ENCODE measurements at regions of chr22 and their contacts with region 1.

Region 1: GRCh38 chr22:45309472-45310227 is at the start of gene FAM118A:
- DNase-seq: peak; percentile 95 to 97
- ATAC-seq: peak; percentile 96
- H3K4me3 ChIP-seq: peak within 1 kb of the TSS; percentile 78 to 83
- H3K27ac ChIP-seq: peak within 1 kb of the TSS in 1 of 2 donors; percentile 25
- H3K4me1 ChIP-seq: peaks cover 0 to 2% of the 10 kb centered on the region in 2 donors
- H3K27me3 ChIP-seq: no peaks in the 10 kb centered on the region
- total RNA-seq, gene FAM118A: 59.2 to 66.7 TPM

Region 2: GRCh38 chr22:45268958-45269844 is 40.4 kb before region 1 on chr22:
- intact Hi-C with region 1: loop called in 1 of 2 experiments (anchors 5 kb)
- DNase-seq: peak; percentile 89 to 96
- ATAC-seq: peak; percentile 94
- H3K4me3 ChIP-seq: peak overlapping the region; percentile 57 to 89
- H3K27ac ChIP-seq: peak overlapping the region in 1 of 2 donors; percentile 39
- H3K4me1 ChIP-seq: no peaks in the 10 kb centered on the region
- H3K27me3 ChIP-seq: no peaks in the 10 kb centered on the region

Region 3: GRCh38 chr22:45276507-45277105 is 33.0 kb before region 1 on chr22:
- intact Hi-C with region 1: loop called (anchors 5 kb)
- DNase-seq: peak in 1 of 2 donors; percentile 56
- ATAC-seq: no peak
- H3K4me3 ChIP-seq: no peak overlapping the region
- H3K27ac ChIP-seq: no peak overlapping the region
- H3K4me1 ChIP-seq: no peaks in the 10 kb centered on the region
- H3K27me3 ChIP-seq: no peaks in the 10 kb centered on the region

Region 4: DNA sequence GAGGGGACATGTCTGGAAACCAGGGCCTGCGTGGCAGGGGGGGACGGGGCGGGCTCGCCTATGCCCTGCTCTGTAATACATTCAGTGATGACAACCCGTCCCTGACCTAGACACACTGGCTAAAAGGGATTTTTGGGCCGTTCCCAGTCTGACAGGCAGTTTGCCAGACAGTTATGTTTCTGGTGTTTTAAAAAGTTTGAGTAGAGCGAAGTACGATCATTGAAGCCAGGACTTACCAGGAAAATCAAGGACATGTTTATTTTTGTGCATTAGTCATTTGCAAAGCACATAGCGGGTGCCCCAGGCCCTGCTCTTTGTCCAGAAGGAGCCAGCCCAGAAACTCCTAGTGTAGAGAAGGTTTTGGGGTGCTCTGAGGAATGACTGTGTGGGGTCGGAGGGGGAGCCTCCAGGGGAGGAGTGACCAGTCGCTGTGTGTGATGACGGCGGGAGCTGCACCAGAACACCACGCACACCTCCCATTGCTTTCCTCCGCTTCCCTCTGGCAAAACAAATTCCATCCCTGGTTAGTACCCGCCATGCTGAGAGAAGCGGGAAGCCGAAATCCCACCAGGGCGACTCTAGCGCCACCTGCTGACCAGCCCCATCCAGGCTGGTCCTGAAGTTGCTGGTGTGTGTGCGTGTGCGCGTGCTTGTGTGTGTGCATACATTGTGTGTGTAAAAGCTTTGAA is 243.8 kb after region 1 on chr22:
- intact Hi-C with region 1: loop called in 1 of 2 experiments (anchors 10 kb)
- DNase-seq: peak; percentile 87 to 96
- ATAC-seq: peak; percentile 83
- H3K4me3 ChIP-seq: no peak overlapping the region
- H3K27ac ChIP-seq: peak overlapping the region; percentile 80 to 99
- H3K4me1 ChIP-seq: peaks cover 0 to 3% of the 10 kb centered on the region in 2 donors
- H3K27me3 ChIP-seq: no peaks in the 10 kb centered on the region

Region 5: DNA sequence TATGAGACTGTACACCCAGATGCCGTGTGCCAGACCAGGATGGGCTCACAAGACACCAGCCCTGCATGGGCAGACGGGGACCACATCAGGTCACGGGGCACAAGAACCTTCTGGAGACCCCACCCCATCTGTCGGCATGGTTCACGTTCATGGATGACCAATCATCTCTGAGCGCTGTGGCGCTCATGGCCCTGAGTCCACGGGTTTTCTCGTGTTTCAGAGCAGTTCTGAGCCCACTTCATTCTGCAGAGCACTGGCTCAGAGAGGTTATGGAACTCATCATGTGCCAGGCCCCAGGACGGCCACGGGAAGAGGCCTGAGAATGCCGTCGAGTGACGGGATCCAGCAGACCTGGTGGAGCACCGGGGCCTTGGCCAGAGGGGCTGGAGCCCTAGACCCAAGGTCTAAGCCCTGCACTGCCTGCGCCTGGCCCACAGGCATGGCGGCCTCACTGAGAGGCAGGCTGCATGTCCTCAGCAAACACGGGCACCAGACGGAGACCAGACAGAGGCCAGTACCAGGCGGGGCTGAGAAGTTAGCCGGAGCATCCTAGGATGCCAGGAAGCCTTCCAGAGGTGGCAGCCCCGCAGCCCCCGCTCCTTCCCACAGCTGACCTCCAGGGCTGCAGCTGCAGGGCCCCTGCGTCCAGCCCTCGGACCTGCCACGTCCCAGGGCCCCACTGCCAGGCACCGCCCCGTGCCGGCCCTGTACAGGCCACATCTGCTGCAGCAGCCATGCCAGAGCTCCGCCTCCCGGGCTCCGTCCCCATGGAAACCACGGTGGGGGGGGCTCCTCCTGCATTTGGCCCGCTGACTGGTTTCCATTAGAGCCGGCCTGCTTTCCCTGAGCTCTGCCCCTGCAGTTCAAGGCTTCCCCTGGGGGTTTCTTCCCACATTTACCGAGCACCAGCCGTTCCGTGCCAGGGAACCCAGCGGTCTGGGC is 778.0 kb after region 1 on chr22:
- intact Hi-C with region 1: loop called in 1 of 2 experiments (anchors 10 kb)
- DNase-seq: peak; percentile 94 to 95
- ATAC-seq: peak; percentile 89
- H3K4me3 ChIP-seq: no peak overlapping the region
- H3K27ac ChIP-seq: peak overlapping the region; percentile 68 to 73
- H3K4me1 ChIP-seq: peaks cover 0 to 6% of the 10 kb centered on the region in 2 donors
- H3K27me3 ChIP-seq: no peaks in the 10 kb centered on the region

Measured in aorta (tissue), 5 donors.